RWPE1 (cell line): ENCODE measurements at regions of chr6 and their contacts with region 1.

Region 1: GRCh38 chr6:34414999-34415858 is 10.6 kb downstream of the RPS10 start:
- DNase-seq: peak; percentile 41
- H3K27ac ChIP-seq: no peak overlapping the region
- CTCF ChIP-seq: peak; percentile 58

Region 2: DNA sequence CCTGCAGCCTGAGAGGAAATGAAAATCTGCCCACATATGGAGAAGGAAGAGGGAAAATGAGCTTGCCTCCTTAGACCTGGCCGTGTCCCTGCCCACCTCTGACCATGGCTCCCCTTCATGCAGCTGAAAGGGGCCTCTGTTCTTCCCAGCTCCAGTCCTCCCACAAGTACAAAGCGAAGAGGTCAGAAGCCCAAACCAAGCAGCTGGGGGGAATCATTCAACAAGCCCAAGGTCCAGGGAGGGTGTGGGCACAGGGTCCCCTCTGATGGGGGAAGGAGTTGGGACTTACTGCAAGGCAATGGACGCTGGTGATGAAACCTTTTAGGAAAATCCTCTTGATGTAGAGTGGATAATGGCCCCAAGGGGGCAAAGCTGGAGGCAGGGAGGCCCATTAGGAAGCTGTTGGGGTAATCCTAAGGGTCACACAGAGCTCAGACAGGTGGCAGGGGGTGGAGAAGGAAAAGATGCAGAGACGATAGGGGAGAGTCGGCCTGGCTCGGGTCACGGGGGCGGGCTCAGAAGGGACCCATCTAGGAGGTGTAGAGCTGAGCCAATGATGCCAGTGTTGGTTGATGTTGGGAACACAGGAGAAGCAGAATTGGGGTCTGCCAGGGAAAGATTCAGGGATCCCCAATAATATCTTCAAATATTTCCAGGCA is 253.2 kb before region 1 on chr6:
- CTCF ChIA-PET with region 1: interaction called, 11 read pairs
- POLR2A ChIA-PET with region 1: no interaction called
- DNase-seq: no peak
- H3K27ac ChIP-seq: no peak overlapping the region
- CTCF ChIP-seq: no peak

Region 3: GRCh38 chr6:34196126-34196830 is 219.0 kb before region 1 on chr6:
- CTCF ChIA-PET with region 1: interaction called, 22 read pairs
- POLR2A ChIA-PET with region 1: no interaction called
- DNase-seq: peak; percentile 77
- H3K27ac ChIP-seq: no peak overlapping the region
- CTCF ChIP-seq: peak; percentile 94

Region 4: DNA sequence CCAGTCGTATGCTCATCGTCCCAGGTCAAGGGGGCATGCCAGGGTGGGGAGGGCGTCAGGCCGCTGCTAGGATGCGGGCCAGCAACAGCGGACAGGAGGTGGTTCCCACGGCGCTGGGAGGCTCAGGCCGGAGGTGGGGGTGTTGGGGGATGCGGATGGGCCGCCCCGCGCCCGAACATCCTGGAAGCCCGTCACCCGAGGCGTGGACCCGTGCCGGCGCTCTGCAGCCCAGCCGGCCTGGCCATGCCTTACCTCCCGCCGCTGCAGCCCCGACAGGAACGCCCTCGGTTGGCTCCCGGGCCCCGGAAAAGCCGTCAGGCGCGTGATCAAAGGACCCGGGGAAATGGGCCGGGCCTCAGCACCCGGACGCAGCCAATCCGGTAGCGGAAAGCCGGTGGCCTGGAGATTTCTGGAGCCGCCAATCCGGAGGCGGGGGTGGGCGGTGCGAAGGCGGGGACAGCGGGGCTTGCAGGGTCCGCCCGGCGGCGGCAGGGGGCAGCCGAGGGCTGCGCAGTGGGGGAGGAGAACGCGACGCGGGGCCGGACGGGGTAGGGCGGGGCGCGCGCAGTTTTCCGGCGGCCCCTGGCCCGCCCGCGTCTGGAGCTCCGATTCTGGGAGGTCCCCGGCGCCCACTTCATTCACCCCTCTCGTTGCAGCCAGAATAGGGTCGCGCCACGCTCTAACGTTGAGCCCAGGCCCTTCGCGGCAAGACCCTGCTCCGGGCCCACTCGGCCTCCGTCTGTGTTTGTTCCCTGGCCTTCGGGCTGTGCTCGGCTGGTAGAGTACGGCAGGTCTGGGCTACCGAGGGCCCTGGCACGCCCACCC is 166.3 kb before region 1 on chr6 and contains the start of gene SMIM29:
- CTCF ChIA-PET with region 1: interaction called, 29 read pairs
- POLR2A ChIA-PET with region 1: interaction called, 3 read pairs
- DNase-seq: peak; percentile 93
- H3K27ac ChIP-seq: peak within 1 kb of the TSS; percentile 87
- CTCF ChIP-seq: peak; percentile 95

Region 5: DNA sequence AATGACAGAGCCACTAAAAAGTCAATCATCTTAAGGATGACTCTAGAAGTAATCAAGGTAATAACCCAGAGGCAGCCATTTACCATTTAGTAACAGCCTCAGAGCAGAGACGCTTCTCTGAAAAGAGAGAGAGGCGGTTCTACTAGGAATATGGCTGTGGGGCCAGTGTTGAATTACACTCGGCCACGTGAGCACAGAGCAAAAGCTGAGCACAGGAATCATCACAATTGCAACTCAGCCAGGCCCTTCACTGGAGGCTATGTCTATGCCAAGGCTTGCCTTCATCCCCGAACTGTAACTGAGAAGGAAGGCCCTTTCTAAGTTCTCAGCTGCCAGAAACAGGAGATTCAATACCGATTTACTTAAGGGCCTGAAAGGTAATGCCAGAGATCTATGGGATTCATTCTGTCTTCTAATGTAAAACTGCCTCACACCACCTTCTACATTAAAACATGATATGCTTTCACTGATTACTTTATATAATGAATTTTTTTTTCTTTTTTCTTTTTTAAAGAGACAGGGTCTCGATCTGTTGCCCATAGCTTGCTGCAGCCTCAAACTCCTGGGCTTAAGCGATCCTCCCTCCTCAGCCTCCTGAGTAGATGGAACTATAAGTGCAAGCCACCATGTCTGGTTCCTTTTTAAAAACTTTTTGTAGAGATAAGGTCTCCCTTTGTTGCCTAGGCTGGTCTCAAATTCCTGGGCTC is 90.3 kb before region 1 on chr6:
- CTCF ChIA-PET with region 1: no interaction called
- POLR2A ChIA-PET with region 1: no interaction called
- DNase-seq: no peak
- H3K27ac ChIP-seq: no peak overlapping the region
- CTCF ChIP-seq: no peak